ENCODE measurements at regions of chr16 and their contacts with region 1.

Region 1: DNA sequence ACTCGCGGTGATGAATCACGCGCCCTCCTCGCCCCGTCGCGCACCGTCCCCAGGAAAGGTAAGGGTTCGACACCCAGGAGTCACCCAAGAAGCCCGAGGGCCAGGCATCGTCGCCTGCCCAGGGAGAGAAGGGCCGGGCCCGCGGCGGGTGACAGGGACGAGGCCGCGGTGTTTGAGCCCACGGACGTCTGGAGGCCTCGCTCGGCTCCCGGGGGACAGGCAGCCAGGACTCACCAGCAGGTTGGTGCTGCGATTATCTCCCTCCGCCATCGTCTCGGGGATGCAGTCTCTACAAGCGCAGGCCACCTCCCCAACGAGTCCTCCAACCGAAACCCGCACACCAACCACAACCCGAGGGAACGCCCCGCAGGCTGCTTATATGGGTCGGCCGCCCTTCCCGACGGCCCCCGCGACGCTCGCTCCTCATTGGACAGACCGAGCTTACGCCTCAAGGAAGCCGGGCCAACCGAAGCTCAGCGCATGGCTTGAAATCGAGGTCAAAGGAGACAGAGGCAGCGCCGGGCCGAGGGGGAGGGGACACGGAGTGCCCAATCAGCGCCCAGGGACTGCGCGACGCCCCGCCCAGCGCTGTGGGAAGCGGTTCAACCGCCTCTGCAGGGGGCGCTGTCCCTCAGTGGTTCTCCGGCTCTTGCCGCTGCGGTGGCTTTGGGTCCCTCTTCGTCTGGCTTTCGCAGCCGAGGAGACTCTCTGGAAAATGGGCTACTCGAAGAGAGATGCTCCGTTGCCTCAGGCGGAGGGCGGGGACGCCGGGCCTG is at the start of gene ARL6IP1:
- DNase-seq: peak; percentile 98
- CTCF ChIP-seq: peak; percentile 96

Region 2: DNA sequence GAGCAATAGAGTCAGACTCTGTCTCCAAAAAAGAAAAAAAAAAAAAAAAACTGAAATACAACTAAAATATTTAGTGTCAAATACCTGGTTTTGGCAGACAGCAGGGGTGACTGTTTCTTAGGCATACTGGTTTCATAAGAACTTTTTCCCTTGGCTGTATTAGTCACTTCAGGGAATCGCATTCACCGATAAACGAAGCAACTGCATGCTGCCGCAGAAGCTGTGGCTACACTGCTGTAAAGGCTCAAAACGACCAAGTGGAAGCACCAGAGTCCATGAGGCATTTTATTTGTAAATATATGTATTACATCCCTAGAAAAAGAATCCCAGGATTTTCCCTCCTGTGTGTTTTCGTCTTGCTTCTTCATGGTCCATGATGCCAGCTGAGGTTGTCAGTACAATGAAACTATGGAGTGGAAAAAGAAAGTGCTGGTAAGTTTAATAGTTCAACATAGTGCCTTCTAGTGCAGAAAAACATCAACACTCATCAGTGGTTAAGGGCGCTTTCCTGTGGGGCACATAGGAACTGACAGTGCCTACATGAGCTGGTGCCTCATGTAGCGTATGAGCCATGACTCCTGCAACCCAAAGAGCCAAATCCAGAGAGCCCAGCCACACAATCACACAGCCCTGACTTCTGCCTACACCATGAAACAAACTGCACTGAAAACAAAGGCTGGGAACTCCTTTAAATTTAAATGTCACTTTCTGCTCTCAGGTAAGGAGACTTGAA is 18.5 kb before region 1 on chr16:
- CTCF ChIA-PET with region 1: interaction called, 20 read pairs
- POLR2A ChIA-PET with region 1: interaction called, 107 read pairs
- DNase-seq: no peak
- CTCF ChIP-seq: no peak

Region 3: DNA sequence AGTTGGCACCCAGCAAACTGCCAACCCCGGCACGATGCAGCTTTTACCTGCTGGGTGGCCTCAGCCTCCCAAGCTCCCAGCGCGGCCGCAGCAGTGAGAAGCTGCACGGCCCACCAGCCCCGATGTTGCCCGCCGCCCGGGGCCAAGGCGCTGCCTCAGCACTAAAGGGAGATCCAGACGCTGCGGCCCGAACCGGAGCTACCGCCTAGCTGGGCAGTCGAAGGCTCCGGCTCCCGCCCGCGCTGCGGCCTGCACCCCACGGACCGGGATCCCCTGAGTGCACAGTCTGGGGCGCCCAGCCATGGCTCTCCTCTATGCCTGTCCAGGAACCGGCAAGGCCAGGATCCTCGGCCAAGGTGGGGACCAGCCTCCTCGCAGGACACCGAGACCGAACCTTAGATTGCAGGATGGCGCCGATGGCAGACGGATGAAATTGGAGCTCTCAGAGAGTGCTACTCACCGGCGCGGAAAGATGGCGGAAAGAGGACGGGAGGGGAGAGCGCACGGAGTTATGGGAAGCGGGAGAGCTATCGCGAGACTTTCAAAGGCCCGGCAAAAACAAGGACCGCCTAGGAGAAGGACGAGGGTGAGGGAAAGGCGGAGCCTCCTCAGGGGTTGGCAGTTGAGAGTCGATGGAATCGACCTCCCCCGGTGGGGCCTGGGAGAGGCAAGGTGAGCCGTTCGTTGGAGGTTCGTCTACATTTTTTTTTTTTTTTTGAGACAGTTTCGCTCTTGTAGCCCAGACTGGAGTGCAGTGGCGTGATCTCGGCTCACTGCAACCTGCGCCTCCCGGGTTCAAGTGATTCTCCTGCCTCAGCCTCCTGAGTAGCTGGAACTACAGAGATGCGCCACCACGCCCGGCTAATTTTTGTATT is 11.3 kb before region 1 on chr16 and contains the start of gene RPS15A:
- CTCF ChIA-PET with region 1: interaction called, 46 read pairs
- POLR2A ChIA-PET with region 1: interaction called, 107 read pairs
- DNase-seq: peak; percentile 97
- CTCF ChIP-seq: no peak

Region 4: DNA sequence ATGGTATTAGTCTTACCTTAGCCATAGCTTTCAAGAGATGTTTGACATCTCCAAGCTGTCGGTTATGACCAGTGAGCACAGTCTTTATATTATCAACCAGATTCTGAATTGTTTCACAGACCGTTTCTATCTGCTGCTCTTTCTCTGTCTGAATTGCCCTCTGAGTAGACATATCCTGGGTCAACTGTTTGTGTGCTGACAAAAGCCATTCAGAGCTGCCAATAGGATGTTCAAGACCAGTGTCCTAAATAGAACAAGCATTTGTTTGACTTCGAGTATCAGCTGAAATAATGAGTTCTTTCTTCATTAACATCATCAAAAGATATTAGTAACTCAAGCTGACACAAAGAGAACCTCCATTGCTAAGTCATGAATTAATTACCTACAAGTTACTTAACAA is 14.9 kb after region 1 on chr16:
- CTCF ChIA-PET with region 1: interaction called, 27 read pairs
- POLR2A ChIA-PET with region 1: interaction called, 9 read pairs
- DNase-seq: no peak
- CTCF ChIP-seq: no peak

Region 5: GRCh38 chr16:18979936-18980335 is 178.6 kb after region 1 on chr16:
- CTCF ChIA-PET with region 1: no interaction called
- POLR2A ChIA-PET with region 1: no interaction called
- DNase-seq: no peak
- CTCF ChIP-seq: no peak

Region 6: GRCh38 chr16:19138601-19139000 is 337.2 kb after region 1 on chr16:
- CTCF ChIA-PET with region 1: no interaction called
- POLR2A ChIA-PET with region 1: no interaction called
- DNase-seq: no peak
- CTCF ChIP-seq: no peak

Region 7: GRCh38 chr16:19323596-19323995 is 522.2 kb after region 1 on chr16:
- CTCF ChIA-PET with region 1: no interaction called
- POLR2A ChIA-PET with region 1: no interaction called
- DNase-seq: no peak
- CTCF ChIP-seq: no peak